Mammary epithelial cell (primary cell): ENCODE measurements at regions of chr5 and their contacts with region 1.

Region 1: GRCh38 chr5:146965761-146966659 is 87.5 kb upstream of the PPP2R2B start:
- DNase-seq: peak; percentile 62
- H3K4me3 ChIP-seq: no peak overlapping the region
- H3K27ac ChIP-seq: no peak overlapping the region
- H3K4me1 ChIP-seq: peaks cover 4% of the 10 kb centered on the region
- H3K27me3 ChIP-seq: no peaks in the 10 kb centered on the region
- CTCF ChIP-seq: peak; percentile 83 to 84

Region 2: GRCh38 chr5:146541958-146542849 is 423.8 kb before region 1 on chr5:
- CTCF ChIA-PET with region 1: interaction called, 8 read pairs
- dilution Hi-C with region 1: no loop called
- in situ Hi-C with region 1: loop called (anchors 5 kb)
- intact Hi-C with region 1: loop called (anchors 1 kb)
- DNase-seq: peak; percentile 44
- H3K4me3 ChIP-seq: no peak overlapping the region
- H3K27ac ChIP-seq: no peak overlapping the region
- H3K4me1 ChIP-seq: peaks cover 4% of the 10 kb centered on the region
- H3K27me3 ChIP-seq: no peaks in the 10 kb centered on the region
- CTCF ChIP-seq: peak; percentile 96

Region 3: DNA sequence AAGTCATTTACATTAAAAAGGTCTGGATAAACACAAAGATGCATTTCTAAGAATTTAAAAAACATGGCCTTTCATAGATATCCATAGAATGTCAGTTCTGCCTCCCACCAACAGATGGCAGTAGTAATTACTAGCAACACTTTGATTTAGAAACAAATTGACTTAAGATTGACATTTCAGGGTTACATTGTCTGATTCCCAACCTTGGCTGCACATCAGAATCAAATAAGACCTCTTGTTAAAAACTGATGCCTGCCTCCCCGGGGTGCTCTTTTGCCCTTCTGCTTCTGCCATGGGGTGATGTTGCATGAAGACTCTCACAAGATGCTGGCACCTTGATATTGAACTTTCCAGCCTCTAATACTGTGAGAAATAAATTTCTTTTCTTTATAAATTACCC is 303.8 kb before region 1 on chr5:
- CTCF ChIA-PET with region 1: no interaction called
- dilution Hi-C with region 1: no loop called
- in situ Hi-C with region 1: loop called (anchors 10 kb)
- intact Hi-C with region 1: loop called (anchors 1 kb)
- DNase-seq: peak; percentile 22
- H3K4me3 ChIP-seq: no peak overlapping the region
- H3K27ac ChIP-seq: no peak overlapping the region
- H3K4me1 ChIP-seq: no peaks in the 10 kb centered on the region
- H3K27me3 ChIP-seq: no peaks in the 10 kb centered on the region
- CTCF ChIP-seq: peak; percentile 63 to 72

Region 4: GRCh38 chr5:146818822-146819221 is 147.2 kb before region 1 on chr5:
- CTCF ChIA-PET with region 1: no interaction called
- dilution Hi-C with region 1: no loop called
- in situ Hi-C with region 1: no loop called
- intact Hi-C with region 1: loop called (anchors 2 kb)
- DNase-seq: no peak
- H3K4me3 ChIP-seq: no peak overlapping the region
- H3K27ac ChIP-seq: no peak overlapping the region
- H3K4me1 ChIP-seq: peaks cover 3% of the 10 kb centered on the region
- H3K27me3 ChIP-seq: no peaks in the 10 kb centered on the region
- CTCF ChIP-seq: no peak

Region 5: GRCh38 chr5:147051193-147051592 is 85.2 kb after region 1 on chr5:
- CTCF ChIA-PET with region 1: no interaction called
- dilution Hi-C with region 1: no loop called
- in situ Hi-C with region 1: no loop called
- intact Hi-C with region 1: no loop called
- DNase-seq: peak; percentile 17
- H3K4me3 ChIP-seq: no peak overlapping the region
- H3K27ac ChIP-seq: no peak overlapping the region
- H3K4me1 ChIP-seq: no peaks in the 10 kb centered on the region
- H3K27me3 ChIP-seq: no peaks in the 10 kb centered on the region
- CTCF ChIP-seq: no peak

Region 6: GRCh38 chr5:147369742-147370374 is 403.8 kb after region 1 on chr5:
- CTCF ChIA-PET with region 1: interaction called, 3 read pairs
- dilution Hi-C with region 1: no loop called
- in situ Hi-C with region 1: no loop called
- intact Hi-C with region 1: loop called (anchors 10 kb)
- DNase-seq: no peak
- H3K4me3 ChIP-seq: no peak overlapping the region
- H3K27ac ChIP-seq: no peak overlapping the region
- H3K4me1 ChIP-seq: no peaks in the 10 kb centered on the region
- H3K27me3 ChIP-seq: peaks cover 3% of the 10 kb centered on the region
- CTCF ChIP-seq: peak; percentile 63 to 70